Activated CD8-positive, alpha-beta T cell treated with anti-CD3 and anti-CD28 coated beads, Interleukin-2, amount 10 ng/mL, durations not matched to agents 7 days and 5 days (primary cell): ENCODE measurements at regions of chr21 and their contacts with region 1.

Region 1: DNA sequence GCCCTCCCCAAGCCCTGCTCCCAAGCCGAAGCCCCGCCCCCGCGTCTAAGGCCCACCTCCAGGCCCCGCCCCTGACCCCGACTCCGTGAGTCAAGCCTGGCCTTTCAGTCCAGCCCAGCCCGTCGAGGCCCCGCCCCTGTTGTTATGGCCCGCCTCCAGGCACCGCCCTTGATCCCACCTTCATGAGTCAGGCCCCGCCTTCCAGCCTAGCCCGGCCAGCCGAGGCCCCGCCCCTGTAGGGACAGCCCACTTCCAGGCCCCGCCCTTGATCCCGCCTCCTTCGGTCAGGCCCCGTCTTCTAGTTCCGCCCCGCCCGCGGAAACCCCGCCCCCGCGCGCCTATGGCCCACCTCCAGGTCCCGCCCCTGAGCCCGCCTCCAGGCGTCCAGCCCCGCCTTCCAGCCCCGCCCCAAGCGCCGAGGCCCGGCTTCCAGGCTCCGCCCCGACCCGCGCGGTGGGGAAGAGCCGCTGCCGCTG is 247 bp upstream of the DOP1B start:
- DNase-seq: peak; percentile 100
- ATAC-seq: peak; percentile 90
- H3K4me3 Mint-ChIP-seq: peak overlapping the region; percentile 84
- H3K27ac Mint-ChIP-seq: peak overlapping the region; percentile 52
- H3K4me1 Mint-ChIP-seq: peaks cover 33% of the 10 kb centered on the region
- H3K27me3 Mint-ChIP-seq: no peaks in the 10 kb centered on the region

Region 2: DNA sequence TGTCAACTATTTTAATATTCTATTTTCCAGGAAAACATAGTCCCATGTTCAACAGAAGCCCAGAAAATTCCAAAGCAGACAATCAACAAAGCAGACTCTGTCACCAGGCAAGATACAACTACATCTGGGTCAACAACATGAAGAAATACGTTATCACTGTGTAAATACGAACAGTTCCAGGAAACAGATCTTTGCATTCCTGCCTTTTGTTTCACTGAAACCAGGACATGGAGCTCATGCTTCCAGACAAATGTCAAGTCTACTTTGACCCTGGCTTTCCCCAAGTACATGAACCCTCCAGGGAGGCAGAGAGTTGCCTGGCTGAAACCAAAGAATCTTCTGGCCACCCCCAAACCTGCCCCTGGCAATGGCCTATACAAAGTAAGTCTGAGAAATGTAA is 202.8 kb before region 1 on chr21:
- CTCF ChIA-PET with region 1: no interaction called
- POLR2A ChIA-PET with region 1: no interaction called
- DNase-seq: no peak
- ATAC-seq: no peak
- H3K4me3 Mint-ChIP-seq: no peak overlapping the region
- H3K27ac Mint-ChIP-seq: no peak overlapping the region
- H3K4me1 Mint-ChIP-seq: no peaks in the 10 kb centered on the region
- H3K27me3 Mint-ChIP-seq: peaks cover 6% of the 10 kb centered on the region

Region 3: GRCh38 chr21:36174780-36175179 is 18.4 kb after region 1 on chr21:
- CTCF ChIA-PET with region 1: interaction called, 11 read pairs
- POLR2A ChIA-PET with region 1: interaction called, 3 read pairs
- DNase-seq: no peak
- ATAC-seq: no peak
- H3K4me3 Mint-ChIP-seq: no peak overlapping the region
- H3K27ac Mint-ChIP-seq: peak overlapping the region; percentile 60
- H3K4me1 Mint-ChIP-seq: peaks cover 29% of the 10 kb centered on the region
- H3K27me3 Mint-ChIP-seq: no peaks in the 10 kb centered on the region

Region 4: DNA sequence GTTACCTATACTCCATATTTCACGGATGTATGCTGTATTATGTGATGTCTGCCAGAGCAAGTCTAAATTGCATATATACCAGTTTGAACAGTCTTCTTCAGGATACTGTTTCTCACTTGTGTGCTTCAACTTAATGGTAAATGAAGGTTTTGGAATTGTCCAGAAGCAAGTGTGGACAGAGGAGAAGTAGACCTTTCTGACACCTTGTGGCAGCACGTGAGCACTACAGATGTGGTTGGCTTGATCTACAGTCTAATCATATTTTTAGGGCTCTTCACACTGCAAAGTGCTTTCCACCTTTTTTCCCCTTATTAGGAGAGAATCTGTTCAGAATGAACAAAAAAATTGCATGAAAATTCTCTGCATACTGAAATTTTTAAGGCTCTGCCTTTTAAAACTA is 174.5 kb after region 1 on chr21:
- CTCF ChIA-PET with region 1: interaction called, 26 read pairs
- POLR2A ChIA-PET with region 1: no interaction called
- DNase-seq: peak; percentile 60
- ATAC-seq: peak; percentile 88
- H3K4me3 Mint-ChIP-seq: no peak overlapping the region
- H3K27ac Mint-ChIP-seq: peak overlapping the region; percentile 4
- H3K4me1 Mint-ChIP-seq: peaks cover 31% of the 10 kb centered on the region
- H3K27me3 Mint-ChIP-seq: no peaks in the 10 kb centered on the region